Prostate gland (tissue), 2 donors: ENCODE measurements at regions of chr3 and their contacts with region 1.

Region 1: GRCh38 chr3:158434412-158435038 is 136.5 kb upstream of the MLF1 start:
- DNase-seq: peak; percentile 54
- H3K4me3 ChIP-seq: no peak overlapping the region
- H3K27ac ChIP-seq: no peak overlapping the region
- H3K4me1 ChIP-seq: no peaks in the 10 kb centered on the region
- H3K27me3 ChIP-seq: no peaks in the 10 kb centered on the region
- CTCF ChIP-seq: peak; percentile 25 to 69 (median 58)
- POLR2A ChIP-seq: no peak

Region 2: GRCh38 chr3:157618075-157618760 is 816.3 kb before region 1 on chr3:
- intact Hi-C with region 1: loop called (anchors 5 kb)
- DNase-seq: no peak
- H3K4me3 ChIP-seq: no peak overlapping the region
- H3K27ac ChIP-seq: no peak overlapping the region
- H3K4me1 ChIP-seq: no peaks in the 10 kb centered on the region
- H3K27me3 ChIP-seq: no peaks in the 10 kb centered on the region
- CTCF ChIP-seq: peak; percentile 23 to 57 (median 50)
- POLR2A ChIP-seq: no peak